ENCODE measurements at regions of chr6 and their contacts with region 1.

Region 1: GRCh38 chr6:24394780-24395437 is 7.8 kb upstream of the MRS2 start:
- DNase-seq: no peak
- H3K4me3 ChIP-seq: no peak overlapping the region
- H3K27ac ChIP-seq: no peak overlapping the region
- H3K4me1 ChIP-seq: no peaks in the 10 kb centered on the region
- H3K27me3 ChIP-seq: no peaks in the 10 kb centered on the region
- CTCF ChIP-seq: no peak

Region 2: GRCh38 chr6:24188578-24189080 is 206.3 kb before region 1 on chr6:
- dilution Hi-C with region 1: no loop called
- DNase-seq: no peak
- H3K4me3 ChIP-seq: no peak overlapping the region
- H3K27ac ChIP-seq: no peak overlapping the region
- H3K4me1 ChIP-seq: no peaks in the 10 kb centered on the region
- H3K27me3 ChIP-seq: no peaks in the 10 kb centered on the region
- CTCF ChIP-seq: no peak

Region 3: GRCh38 chr6:24283043-24283985 is 111.6 kb before region 1 on chr6:
- dilution Hi-C with region 1: loop called (anchors 25 kb)
- DNase-seq: peak; percentile 35
- H3K4me3 ChIP-seq: peak overlapping the region in 1 of 3 experiments; percentile 26
- H3K27ac ChIP-seq: no peak overlapping the region
- H3K4me1 ChIP-seq: peaks cover 4% of the 10 kb centered on the region
- H3K27me3 ChIP-seq: no peaks in the 10 kb centered on the region
- CTCF ChIP-seq: peak; percentile 85 to 89 (median 88)

Measured in keratinocyte (primary cell).